Activated T-helper 1 cell treated with anti-CD3 and anti-CD28 coated beads, Interleukin-12 subunit alpha, Interleukin-12 subunit beta, Interleukin-2, Interleukin-4 antibody, amounts not matched to agents 30 ng/mL and 10 ng/mL and 1 ng/mL, durations not matched to agents 14 hours and 24 hours and 36 hours (primary cell): ENCODE measurements at regions of chr1 and their contacts with region 1.

Region 1: DNA sequence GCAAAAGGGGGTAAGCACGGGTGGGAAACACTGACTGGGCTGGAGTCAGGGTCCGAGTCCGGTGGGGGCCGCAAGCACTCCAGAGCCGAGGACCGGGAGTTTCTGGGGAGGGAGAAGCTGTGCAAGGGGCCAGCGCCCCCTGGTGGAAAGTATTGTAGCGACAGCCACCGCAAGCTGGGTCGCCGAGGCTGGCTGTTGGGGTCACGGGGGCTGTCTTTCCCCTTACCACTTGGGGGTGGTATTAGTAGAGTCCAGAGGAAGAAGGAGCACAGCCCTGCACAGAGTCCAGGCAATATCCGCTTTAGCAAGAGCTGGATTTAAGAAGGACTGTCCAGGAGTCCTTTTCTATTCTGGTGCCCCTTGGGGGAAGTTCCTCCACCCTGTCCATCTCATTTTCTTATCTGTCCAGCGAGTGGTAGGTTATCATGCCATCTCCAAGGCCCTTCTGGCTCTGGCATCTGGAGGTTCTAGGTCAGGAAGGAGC is 17.9 kb upstream of the ETV3 start:
- DNase-seq: peak; percentile 65
- H3K4me3 Mint-ChIP-seq: no peak overlapping the region
- H3K27ac Mint-ChIP-seq: no peak overlapping the region
- H3K4me1 Mint-ChIP-seq: peaks cover 18% of the 10 kb centered on the region
- H3K27me3 Mint-ChIP-seq: peaks cover 21% of the 10 kb centered on the region

Region 2: GRCh38 chr1:156583821-156584622 is 572.1 kb before region 1 on chr1:
- intact Hi-C with region 1: no loop called
- DNase-seq: peak; percentile 51
- H3K4me3 Mint-ChIP-seq: no peak overlapping the region
- H3K27ac Mint-ChIP-seq: no peak overlapping the region
- H3K4me1 Mint-ChIP-seq: peaks cover 12% of the 10 kb centered on the region
- H3K27me3 Mint-ChIP-seq: no peaks in the 10 kb centered on the region

Region 3: DNA sequence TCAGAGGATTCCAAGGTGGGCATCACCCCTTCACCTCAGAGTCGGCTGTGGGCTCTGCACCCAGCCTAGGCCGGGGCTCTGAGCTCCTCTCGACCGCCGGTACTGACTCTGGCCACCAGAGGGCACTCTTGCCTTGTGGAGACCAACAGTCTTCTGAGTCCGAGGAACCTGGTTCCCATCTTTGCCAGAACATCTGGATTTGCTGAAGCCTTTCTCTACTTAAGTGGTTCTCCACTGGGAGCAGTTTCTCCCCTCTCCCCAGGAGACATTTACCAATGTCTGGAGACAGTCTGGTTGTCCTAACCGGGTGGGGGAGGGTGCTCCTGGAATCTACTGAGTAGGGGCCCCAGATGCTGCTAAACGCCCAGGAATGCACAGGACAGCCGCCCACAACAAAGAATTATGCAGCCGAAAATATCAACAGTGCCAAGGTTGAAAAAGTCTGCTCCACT is 65.9 kb before region 1 on chr1:
- intact Hi-C with region 1: loop called (anchors 1 kb)
- DNase-seq: peak; percentile 70
- H3K4me3 Mint-ChIP-seq: no peak overlapping the region
- H3K27ac Mint-ChIP-seq: no peak overlapping the region
- H3K4me1 Mint-ChIP-seq: peaks cover 6% of the 10 kb centered on the region
- H3K27me3 Mint-ChIP-seq: peaks cover 6% of the 10 kb centered on the region

Region 4: GRCh38 chr1:157739229-157739901 is 583.3 kb after region 1 on chr1:
- intact Hi-C with region 1: no loop called
- DNase-seq: no peak
- H3K4me3 Mint-ChIP-seq: no peak overlapping the region
- H3K27ac Mint-ChIP-seq: no peak overlapping the region
- H3K4me1 Mint-ChIP-seq: no peaks in the 10 kb centered on the region
- H3K27me3 Mint-ChIP-seq: peaks cover 4% of the 10 kb centered on the region